ENCODE measurements at regions of chr12 and their contacts with region 1.

Region 1: GRCh38 chr12:69837191-69837590 is 12.2 kb downstream of the MYRFL start:
- DNase-seq: no peak
- H3K4me3 ChIP-seq: no peak overlapping the region
- H3K27ac ChIP-seq: peak overlapping the region in 1 of 4 donors; percentile 35
- H3K4me1 ChIP-seq: peaks cover 0 to 18% (median 4%) of the 10 kb centered on the region in 4 donors
- H3K27me3 ChIP-seq: no peaks in the 10 kb centered on the region
- CTCF ChIP-seq: no peak
- EP300 ChIP-seq: no peak
- POLR2A ChIP-seq: no peak

Region 2: GRCh38 chr12:69570000-69570516 is 267.1 kb before region 1 on chr12:
- in situ Hi-C with region 1: no loop called
- intact Hi-C with region 1: no loop called
- DNase-seq: no peak
- H3K4me3 ChIP-seq: no peak overlapping the region
- H3K27ac ChIP-seq: no peak overlapping the region
- H3K4me1 ChIP-seq: no peaks in the 10 kb centered on the region
- H3K27me3 ChIP-seq: no peaks in the 10 kb centered on the region
- CTCF ChIP-seq: no peak
- EP300 ChIP-seq: no peak
- POLR2A ChIP-seq: no peak

Region 3: GRCh38 chr12:71045781-71046180 is 1208.6 kb after region 1 on chr12:
- in situ Hi-C with region 1: no loop called
- intact Hi-C with region 1: loop called (anchors 5 kb)
- DNase-seq: no peak
- H3K4me3 ChIP-seq: no peak overlapping the region
- H3K27ac ChIP-seq: no peak overlapping the region
- H3K4me1 ChIP-seq: peaks cover 0 to 18% (median 9%) of the 10 kb centered on the region in 4 donors
- H3K27me3 ChIP-seq: no peaks in the 10 kb centered on the region
- CTCF ChIP-seq: no peak
- EP300 ChIP-seq: no peak
- POLR2A ChIP-seq: no peak